ENCODE measurements at regions of chr4 and their contacts with region 1.

Region 1: DNA sequence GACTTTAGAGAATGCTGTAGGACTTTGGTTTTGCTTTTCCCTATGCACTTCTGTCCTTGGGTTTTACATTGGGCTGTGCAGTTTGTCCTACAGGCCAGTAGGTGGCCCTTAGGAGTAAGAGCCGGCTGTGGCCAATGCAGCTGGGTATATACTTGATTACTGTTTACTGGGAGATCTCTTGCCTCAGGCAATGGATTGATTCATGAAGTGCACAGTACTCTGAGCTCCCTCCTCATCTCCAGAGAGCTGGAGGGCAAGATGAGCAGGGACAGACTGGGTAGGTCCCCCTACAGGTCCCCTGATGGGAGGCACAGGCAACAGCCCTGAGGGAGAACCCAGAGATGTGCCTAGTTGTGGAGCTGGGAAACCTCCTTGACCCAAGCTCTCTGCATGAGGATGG is 103.8 kb upstream of the QRFPR start:
- DNase-seq: peak; percentile 7
- H3K4me3 ChIP-seq: no peak overlapping the region
- CTCF ChIP-seq: peak; percentile 74

Region 2: GRCh38 chr4:121472937-121473721 is 11.5 kb before region 1 on chr4:
- CTCF ChIA-PET with region 1: interaction called, 14 read pairs
- POLR2A ChIA-PET with region 1: no interaction called
- DNase-seq: no peak
- H3K4me3 ChIP-seq: no peak overlapping the region
- CTCF ChIP-seq: no peak

Region 3: GRCh38 chr4:121656269-121656641 is 171.6 kb after region 1 on chr4:
- CTCF ChIA-PET with region 1: interaction called, 18 read pairs
- POLR2A ChIA-PET with region 1: no interaction called
- DNase-seq: no peak
- H3K4me3 ChIP-seq: no peak overlapping the region
- CTCF ChIP-seq: peak; percentile 45

Measured in AG04449 (cell line).